ENCODE measurements at regions of chr12 and their contacts with region 1.

Region 1: DNA sequence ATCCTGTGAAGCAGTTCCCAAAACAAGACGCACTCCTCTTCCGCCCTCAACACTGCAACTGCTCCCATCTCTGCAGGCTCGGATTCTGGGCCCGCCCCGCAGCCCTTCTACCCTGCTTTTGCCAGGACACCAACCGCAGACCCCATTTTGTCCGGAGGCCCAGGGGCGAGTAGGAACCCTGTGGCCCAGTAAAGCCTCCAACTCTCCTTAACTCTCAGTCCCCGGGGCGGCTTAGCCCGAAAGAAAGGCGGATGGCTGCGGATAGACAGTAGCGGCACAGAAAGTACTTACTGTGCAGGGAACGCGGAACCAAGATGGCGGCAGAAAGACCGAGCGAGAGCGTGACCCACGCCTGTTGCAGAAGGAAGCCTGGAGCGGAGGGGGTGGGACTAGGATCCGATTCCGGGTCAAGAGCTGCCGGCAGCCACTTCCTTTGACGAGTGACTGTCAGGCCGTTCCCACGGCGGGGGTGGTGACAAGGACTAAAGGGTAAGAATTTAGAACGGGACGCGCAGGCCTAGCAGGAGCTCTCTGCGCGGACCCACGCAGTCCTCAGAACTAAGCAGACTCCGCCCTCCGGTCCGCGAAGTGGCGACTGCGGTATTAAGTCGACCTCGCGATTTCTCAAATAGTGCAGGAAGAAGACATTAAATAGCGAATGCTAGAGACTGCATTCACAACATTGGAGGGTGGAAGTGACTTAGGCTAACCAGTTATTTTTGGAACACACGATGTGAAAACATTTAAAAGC is at the start of gene NACA:
- DNase-seq: peak; percentile 100
- ATAC-seq: peak; percentile 98
- H3K4me3 Mint-ChIP-seq: peak within 1 kb of the TSS; percentile 98
- H3K27ac Mint-ChIP-seq: peak within 1 kb of the TSS; percentile 97
- H3K4me1 Mint-ChIP-seq: peaks cover 50% of the 10 kb centered on the region
- H3K27me3 Mint-ChIP-seq: no peaks in the 10 kb centered on the region
- total RNA-seq, gene NACA: 793 to 820 TPM

Region 2: DNA sequence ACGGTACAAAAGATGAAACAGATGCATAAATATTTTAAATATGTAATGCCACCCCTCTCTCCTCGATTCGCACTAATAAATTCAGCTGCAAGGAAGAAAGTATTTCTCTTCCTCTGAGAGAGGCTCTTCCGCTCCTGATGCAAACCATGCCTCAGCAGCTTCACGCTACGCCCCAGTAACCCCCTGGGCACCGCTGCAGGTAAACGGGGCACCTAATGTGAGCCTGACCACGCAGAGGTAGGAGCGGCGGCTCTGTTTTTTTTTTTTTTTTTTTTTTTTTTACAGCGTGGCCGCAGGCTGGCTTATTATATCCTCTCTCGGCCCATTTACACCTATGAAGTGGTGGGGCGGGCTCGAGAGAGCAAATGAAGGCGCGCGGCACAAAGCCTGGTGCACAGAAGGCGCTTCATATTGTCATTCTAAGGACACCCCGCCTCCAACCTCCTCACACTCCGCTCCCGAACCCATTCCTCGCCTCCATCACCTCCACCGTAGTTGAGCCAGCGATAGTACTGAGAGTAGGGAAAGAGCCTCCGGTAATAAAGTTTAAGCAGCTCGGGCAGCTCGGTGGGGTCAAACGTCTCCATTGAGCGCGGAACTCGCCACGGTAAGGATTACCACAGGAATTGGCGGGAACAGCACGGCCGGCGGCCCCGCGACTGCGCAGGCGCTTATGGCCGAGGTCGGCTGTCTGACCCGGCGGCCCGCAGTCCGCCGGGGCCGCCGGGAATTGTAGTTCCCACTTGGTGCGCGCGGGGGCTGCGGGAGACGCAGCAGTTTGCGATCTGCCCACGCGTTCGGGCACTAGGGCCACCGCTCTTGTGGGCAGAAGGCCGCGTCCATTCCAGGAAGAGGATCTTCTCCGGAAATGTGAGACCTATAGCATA is 26.8 kb after region 1 on chr12 and contains the start of gene PRIM1:
- CTCF ChIA-PET with region 1: interaction called, 5 read pairs
- POLR2A ChIA-PET with region 1: interaction called, 16 read pairs
- DNase-seq: peak; percentile 91
- ATAC-seq: peak; percentile 89
- H3K4me3 Mint-ChIP-seq: peak within 1 kb of the TSS; percentile 99
- H3K27ac Mint-ChIP-seq: peak within 1 kb of the TSS; percentile 99
- H3K4me1 Mint-ChIP-seq: peaks cover 48% of the 10 kb centered on the region
- H3K27me3 Mint-ChIP-seq: no peaks in the 10 kb centered on the region
- total RNA-seq, gene PRIM1: 56.8 to 60.4 TPM